Activated CD4-positive, alpha-beta T cell treated with anti-CD3 and anti-CD28 coated beads for 36 hours (primary cell): ENCODE measurements at regions of chrX and their contacts with region 1.

Region 1: DNA sequence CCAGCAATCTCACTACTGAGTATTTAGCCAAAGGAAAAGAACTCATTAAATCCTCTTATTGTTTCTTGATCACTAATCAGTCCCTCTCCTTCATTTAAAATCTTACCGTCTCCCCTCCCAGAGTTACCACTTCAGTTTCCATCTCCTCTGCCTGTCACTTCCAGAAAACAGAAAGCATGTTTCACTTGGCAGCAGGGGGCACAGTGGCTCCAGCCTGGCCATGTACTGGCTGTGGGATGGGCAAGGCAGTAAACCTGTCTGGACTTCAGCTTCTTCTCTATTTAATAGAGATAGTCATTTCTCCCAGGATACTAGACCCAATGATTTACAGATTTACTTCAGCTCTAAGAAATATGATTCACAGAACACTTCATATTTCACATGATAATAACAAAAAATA is 63.2 kb downstream of the CD40LG start:
- DNase-seq: peak; percentile 33
- ATAC-seq: peak; percentile 20
- H3K4me3 Mint-ChIP-seq: no peak overlapping the region
- H3K27ac Mint-ChIP-seq: peak overlapping the region; percentile 92
- H3K4me1 Mint-ChIP-seq: peaks cover 74% of the 10 kb centered on the region
- H3K27me3 Mint-ChIP-seq: no peaks in the 10 kb centered on the region

Region 2: DNA sequence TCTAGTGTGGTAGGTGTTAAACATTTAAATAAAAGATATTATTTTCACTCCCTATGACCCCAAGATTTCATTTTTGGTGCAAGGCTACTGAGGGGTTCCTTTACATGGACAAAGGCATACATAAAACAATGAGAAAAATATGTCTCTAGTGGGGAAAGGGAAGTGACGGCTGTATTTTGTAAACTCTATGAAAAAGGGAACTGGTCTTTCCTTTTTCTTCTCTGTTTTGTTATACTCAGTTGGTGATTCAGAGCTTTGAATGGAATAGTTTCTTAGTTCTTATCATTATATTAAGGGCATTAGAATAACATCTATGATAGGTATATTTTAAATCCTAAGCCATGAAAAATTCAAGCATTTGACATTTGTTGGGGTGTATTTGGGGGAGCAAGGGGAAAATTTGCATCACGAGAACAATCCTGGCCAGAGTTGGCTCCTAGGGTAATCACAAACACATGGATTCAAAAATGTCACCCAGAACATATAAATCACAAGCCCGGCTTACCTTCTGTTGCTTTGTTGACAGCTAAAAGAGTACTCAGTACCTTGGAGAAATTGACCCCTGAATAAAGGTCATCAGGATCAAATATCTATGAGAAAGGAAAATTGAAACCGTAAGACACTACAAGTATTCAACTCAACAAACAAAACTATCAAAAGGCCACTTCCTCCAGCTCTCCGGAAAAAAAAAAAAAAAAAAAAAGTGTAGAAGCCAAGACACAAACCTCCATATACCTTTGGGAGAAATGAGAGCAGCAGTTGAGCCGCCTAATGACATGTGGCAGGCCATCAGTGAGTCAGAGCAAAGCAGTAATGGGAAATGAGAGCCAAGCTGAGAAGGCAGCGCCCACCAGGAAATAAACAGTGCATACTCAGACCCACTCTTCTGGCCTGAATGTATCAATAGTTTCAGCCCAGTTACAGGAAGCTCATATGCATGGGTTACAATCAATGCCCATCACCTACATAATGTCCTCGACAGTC is 36.1 kb after region 1 on chrX:
- CTCF ChIA-PET with region 1: interaction called, 7 read pairs
- POLR2A ChIA-PET with region 1: no interaction called
- intact Hi-C with region 1: loop called in 1 of 2 experiments (anchors 5 kb)
- DNase-seq: peak; percentile 47
- ATAC-seq: peak; percentile 54
- H3K4me3 Mint-ChIP-seq: peak overlapping the region; percentile 7
- H3K27ac Mint-ChIP-seq: peak overlapping the region; percentile 72
- H3K4me1 Mint-ChIP-seq: peaks cover 89% of the 10 kb centered on the region
- H3K27me3 Mint-ChIP-seq: no peaks in the 10 kb centered on the region

Region 3: GRCh38 chrX:136856551-136856950 is 145.4 kb after region 1 on chrX:
- CTCF ChIA-PET with region 1: no interaction called
- POLR2A ChIA-PET with region 1: no interaction called
- intact Hi-C with region 1: loop called in 1 of 2 experiments (anchors 5 kb)
- DNase-seq: no peak
- ATAC-seq: no peak
- H3K4me3 Mint-ChIP-seq: no peak overlapping the region
- H3K27ac Mint-ChIP-seq: peak overlapping the region; percentile 6
- H3K4me1 Mint-ChIP-seq: peaks cover 32% of the 10 kb centered on the region
- H3K27me3 Mint-ChIP-seq: no peaks in the 10 kb centered on the region

Region 4: GRCh38 chrX:136909706-136910564 is 198.8 kb after region 1 on chrX:
- CTCF ChIA-PET with region 1: no interaction called
- POLR2A ChIA-PET with region 1: no interaction called
- intact Hi-C with region 1: loop called in 1 of 2 experiments (anchors 5 kb)
- DNase-seq: peak; percentile 75
- ATAC-seq: peak; percentile 78
- H3K4me3 Mint-ChIP-seq: peak overlapping the region; percentile 90
- H3K27ac Mint-ChIP-seq: peak overlapping the region; percentile 79
- H3K4me1 Mint-ChIP-seq: peaks cover 16% of the 10 kb centered on the region
- H3K27me3 Mint-ChIP-seq: no peaks in the 10 kb centered on the region